RWPE1 (cell line): ENCODE measurements at regions of chrX and their contacts with region 1.

Region 1: GRCh38 chrX:39665830-39666518 is 431.8 kb downstream of the BCOR start:
- DNase-seq: no peak
- H3K27ac ChIP-seq: no peak overlapping the region
- CTCF ChIP-seq: no peak

Region 2: GRCh38 chrX:39688576-39689375 is 22.8 kb after region 1 on chrX:
- CTCF ChIA-PET with region 1: no interaction called
- POLR2A ChIA-PET with region 1: no interaction called
- DNase-seq: peak; percentile 35
- H3K27ac ChIP-seq: peak overlapping the region; percentile 16
- CTCF ChIP-seq: no peak

Region 3: DNA sequence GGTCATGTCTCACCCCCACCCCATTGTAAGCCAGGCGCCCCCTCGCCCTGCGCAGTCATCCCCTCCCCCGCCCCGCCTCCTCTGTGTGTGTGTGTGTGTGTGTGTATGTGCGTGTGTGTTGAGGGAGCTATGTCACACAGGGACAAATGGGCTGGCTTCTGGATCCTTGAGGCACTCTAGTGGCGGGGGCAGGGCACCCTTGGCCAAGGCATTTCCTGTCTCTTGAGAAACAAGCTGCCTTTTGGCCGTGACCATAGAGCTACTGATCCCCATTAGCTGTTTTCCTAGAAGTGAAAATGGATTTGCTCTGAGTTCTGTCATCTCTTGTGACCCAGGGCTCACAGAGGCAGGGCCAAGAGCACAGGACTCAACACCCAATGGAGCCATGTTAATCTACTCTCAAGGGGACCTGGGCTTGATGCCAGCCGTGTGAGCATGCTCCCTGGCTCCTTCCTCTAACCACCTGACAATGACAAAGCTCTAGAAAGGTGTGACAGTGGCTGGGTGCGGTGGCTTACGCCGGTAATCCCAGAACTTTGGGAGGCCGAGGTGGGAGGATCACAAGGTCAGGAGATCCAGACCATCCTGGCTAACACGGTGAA is 594.3 kb after region 1 on chrX:
- CTCF ChIA-PET with region 1: no interaction called
- POLR2A ChIA-PET with region 1: interaction called, 13 read pairs
- DNase-seq: no peak
- H3K27ac ChIP-seq: no peak overlapping the region
- CTCF ChIP-seq: no peak